Colonic mucosa (tissue), 4 donors: ENCODE measurements at regions of chr7 and their contacts with region 1.

Region 1: GRCh38 chr7:150435390-150436073 is 14.9 kb upstream of the GIMAP8 start:
- DNase-seq: peak; percentile 31
- H3K4me3 ChIP-seq: no peak overlapping the region
- H3K27ac ChIP-seq: no peak overlapping the region
- H3K4me1 ChIP-seq: no peaks in the 10 kb centered on the region
- H3K27me3 ChIP-seq: no peaks in the 10 kb centered on the region
- CTCF ChIP-seq: no peak

Region 2: DNA sequence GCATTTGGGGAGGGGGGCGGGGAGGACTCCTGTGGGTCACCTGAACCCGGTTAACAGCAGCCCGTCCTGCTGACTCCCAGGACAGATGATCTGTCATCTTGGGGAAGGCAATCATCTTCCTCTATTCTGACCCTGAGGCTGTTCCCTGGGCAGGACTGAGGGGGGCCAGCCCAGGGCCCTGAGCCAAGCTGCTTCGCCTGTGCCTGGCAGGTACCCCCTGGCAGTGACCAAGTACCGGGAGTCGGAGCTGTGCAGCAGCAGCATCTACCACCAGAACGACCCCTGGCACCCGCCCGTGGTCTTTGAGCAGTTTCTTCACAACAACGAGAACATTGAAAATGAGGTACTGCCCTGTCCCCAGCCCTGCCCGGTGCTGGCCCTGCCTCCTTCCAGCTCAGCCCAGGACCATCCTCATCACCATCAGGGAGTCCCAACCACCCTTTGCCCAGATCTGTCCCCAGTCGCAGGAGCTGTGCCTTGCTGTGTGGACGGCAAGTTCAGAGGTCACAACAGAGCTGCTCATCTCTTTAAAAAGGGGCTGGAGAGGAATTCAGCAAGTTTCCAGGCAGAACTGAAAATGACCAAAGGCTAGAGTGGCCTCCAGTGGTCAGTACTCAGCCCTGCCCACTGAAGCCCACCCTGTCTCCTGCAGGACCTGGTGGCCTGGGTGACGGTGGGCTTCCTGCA is 424.9 kb after region 1 on chr7:
- intact Hi-C with region 1: loop called (anchors 10 kb)
- DNase-seq: peak; percentile 14
- H3K4me3 ChIP-seq: no peak overlapping the region
- H3K27ac ChIP-seq: no peak overlapping the region
- H3K4me1 ChIP-seq: no peaks in the 10 kb centered on the region
- H3K27me3 ChIP-seq: no peaks in the 10 kb centered on the region
- CTCF ChIP-seq: no peak